ENCODE measurements at regions of chr7 and their contacts with region 1.

Region 1: GRCh38 chr7:43582503-43583423 is at the start of gene STK17A:
- DNase-seq: peak; percentile 90
- H3K4me3 ChIP-seq: peak within 1 kb of the TSS; percentile 82 to 98 (median 96)
- H3K27ac ChIP-seq: peak within 1 kb of the TSS; percentile 98
- H3K4me1 ChIP-seq: peaks cover 13% of the 10 kb centered on the region
- H3K27me3 ChIP-seq: no peaks in the 10 kb centered on the region
- CTCF ChIP-seq: peak; percentile 92 to 99
- total RNA-seq, gene STK17A: 109 to 140 TPM

Region 2: DNA sequence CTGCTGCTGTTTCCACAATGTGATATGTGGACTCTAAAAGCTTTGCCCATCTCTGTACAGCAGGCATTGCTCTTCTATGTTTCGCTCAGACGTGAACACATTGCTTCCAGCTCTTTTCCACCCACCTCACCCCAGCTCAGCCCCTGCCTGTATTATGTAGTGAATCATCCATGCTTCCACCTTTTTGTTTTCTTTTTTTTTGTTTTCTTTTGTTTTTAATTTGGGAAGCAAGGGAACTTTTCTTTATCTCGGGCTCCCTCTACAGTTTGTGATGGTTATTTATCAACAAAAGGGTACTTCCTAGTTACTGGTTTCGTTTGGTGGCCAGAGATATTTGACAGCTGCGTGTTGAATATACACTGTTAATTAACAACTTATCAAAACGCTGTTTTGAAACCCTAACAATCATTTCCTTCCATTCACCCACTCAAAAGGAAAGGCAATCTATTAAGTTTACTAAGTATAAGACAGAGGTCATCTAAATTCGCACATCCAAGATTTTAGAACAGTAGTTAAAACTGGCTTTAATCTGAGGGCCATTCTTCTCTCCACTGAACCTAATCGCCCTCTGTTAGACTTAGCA is 127.7 kb before region 1 on chr7:
- CTCF ChIA-PET with region 1: interaction called, 3 read pairs
- dilution Hi-C with region 1: no loop called
- in situ Hi-C with region 1: no loop called
- intact Hi-C with region 1: loop called (anchors 5 kb)
- DNase-seq: peak; percentile 66
- H3K4me3 ChIP-seq: no peak overlapping the region
- H3K27ac ChIP-seq: no peak overlapping the region
- H3K4me1 ChIP-seq: peaks cover 5% of the 10 kb centered on the region
- H3K27me3 ChIP-seq: no peaks in the 10 kb centered on the region
- CTCF ChIP-seq: peak; percentile 27 to 51

Region 3: GRCh38 chr7:43639858-43640491 is 57.2 kb after region 1 on chr7:
- CTCF ChIA-PET with region 1: interaction called, 13 read pairs
- dilution Hi-C with region 1: loop called (anchors 5 kb)
- in situ Hi-C with region 1: no loop called
- intact Hi-C with region 1: loop called (anchors 1 kb)
- DNase-seq: peak; percentile 46
- H3K4me3 ChIP-seq: no peak overlapping the region
- H3K27ac ChIP-seq: peak overlapping the region; percentile 73
- H3K4me1 ChIP-seq: peaks cover 50% of the 10 kb centered on the region
- H3K27me3 ChIP-seq: no peaks in the 10 kb centered on the region
- CTCF ChIP-seq: no peak

Region 4: DNA sequence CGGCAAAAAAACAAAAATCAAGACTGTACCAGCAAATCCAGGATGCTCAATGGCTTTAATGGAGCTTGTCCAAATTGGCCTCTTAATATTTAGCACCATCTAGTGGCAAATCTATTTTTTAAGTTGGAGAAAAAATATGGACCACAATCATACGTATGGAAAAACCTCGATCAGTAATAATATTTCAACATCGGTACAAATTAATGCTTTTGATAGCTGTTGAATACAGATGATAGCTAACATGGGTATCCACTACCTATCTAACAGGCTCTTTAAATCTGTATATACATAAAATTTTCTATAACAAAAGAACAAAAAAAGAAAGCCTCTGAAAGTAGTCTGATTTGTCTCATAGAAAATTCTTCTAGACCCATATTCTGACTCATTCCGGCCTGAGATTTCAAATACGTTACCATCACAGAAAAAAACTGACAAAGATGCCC is 117.3 kb after region 1 on chr7:
- CTCF ChIA-PET with region 1: interaction called, 33 read pairs
- dilution Hi-C with region 1: no loop called
- in situ Hi-C with region 1: loop called (anchors 10 to 25 kb)
- intact Hi-C with region 1: loop called (anchors 1 kb)
- DNase-seq: peak; percentile 46
- H3K4me3 ChIP-seq: no peak overlapping the region
- H3K27ac ChIP-seq: no peak overlapping the region
- H3K4me1 ChIP-seq: peaks cover 2% of the 10 kb centered on the region
- H3K27me3 ChIP-seq: no peaks in the 10 kb centered on the region
- CTCF ChIP-seq: peak; percentile 50 to 60

Region 5: DNA sequence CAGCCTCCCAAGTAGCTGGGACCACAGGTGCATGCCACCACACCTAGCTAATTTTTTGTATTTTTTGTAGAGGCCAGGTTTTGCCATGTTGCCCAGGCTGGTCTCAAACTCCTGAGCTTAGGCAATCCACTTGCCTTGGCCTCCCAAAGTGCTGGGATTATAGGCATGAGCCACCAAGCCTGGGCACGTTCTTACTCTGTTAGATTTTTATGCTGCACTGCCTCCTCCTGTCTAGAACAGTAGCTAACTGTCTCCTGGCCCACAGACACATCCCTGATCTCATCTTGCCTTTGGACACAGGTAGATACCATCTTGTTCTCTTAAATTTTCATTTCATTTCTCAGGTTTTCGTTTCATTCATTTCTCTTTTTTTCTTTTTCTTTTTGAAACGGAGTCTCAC is 216.8 kb after region 1 on chr7:
- CTCF ChIA-PET with region 1: interaction called, 18 read pairs
- dilution Hi-C with region 1: no loop called
- in situ Hi-C with region 1: no loop called
- intact Hi-C with region 1: loop called (anchors 1 kb)
- DNase-seq: peak; percentile 46
- H3K4me3 ChIP-seq: no peak overlapping the region
- H3K27ac ChIP-seq: no peak overlapping the region
- H3K4me1 ChIP-seq: no peaks in the 10 kb centered on the region
- H3K27me3 ChIP-seq: no peaks in the 10 kb centered on the region
- CTCF ChIP-seq: peak; percentile 22 to 51